Sciatic nerve (tissue), 2 donors: ENCODE measurements at regions of chr15 and their contacts with region 1.

Region 1: DNA sequence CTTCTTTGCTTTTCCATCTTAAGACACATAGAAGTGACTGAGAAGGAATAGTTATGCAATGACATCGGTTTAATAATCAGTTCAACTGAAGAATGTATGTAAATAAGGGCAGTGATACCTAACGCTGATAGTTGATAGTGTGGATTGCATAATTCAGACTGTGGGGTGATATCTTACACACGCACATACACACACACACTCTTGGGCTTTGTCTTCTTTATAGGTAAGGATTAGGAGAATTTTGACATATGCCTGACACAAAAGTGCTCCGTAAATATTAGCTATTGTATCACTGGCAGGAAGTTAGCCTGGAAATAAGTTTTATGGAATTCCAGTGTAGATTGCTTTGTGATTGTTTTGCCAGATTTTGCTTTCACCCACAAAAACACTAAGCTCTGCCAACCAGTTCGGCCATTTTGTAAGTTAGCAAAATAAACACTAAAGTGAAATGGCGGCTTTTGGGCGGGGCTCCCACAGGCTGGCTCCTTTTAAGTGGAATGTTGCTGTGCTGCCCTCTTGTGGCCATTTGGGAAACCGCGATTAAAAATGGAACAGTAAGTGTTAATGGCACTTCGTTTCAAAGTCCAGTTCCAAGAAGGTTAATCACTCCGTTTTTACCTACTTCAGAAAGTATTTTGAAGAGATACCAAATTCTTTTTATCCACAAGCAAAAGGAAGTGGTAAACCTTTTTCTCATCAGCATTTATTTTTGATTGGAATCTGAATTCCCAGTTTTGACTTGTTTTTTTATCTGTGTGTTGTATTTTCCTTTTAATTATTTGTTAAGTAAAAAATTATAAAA is 17.7 kb downstream of the CHD2 start:
- DNase-seq: peak; percentile 97
- ATAC-seq: peak; percentile 86

Region 2: GRCh38 chr15:92808978-92809879 is 108.6 kb before region 1 on chr15:
- intact Hi-C with region 1: loop called (anchors 5 kb)
- DNase-seq: peak; percentile 99
- ATAC-seq: peak; percentile 94

Region 3: DNA sequence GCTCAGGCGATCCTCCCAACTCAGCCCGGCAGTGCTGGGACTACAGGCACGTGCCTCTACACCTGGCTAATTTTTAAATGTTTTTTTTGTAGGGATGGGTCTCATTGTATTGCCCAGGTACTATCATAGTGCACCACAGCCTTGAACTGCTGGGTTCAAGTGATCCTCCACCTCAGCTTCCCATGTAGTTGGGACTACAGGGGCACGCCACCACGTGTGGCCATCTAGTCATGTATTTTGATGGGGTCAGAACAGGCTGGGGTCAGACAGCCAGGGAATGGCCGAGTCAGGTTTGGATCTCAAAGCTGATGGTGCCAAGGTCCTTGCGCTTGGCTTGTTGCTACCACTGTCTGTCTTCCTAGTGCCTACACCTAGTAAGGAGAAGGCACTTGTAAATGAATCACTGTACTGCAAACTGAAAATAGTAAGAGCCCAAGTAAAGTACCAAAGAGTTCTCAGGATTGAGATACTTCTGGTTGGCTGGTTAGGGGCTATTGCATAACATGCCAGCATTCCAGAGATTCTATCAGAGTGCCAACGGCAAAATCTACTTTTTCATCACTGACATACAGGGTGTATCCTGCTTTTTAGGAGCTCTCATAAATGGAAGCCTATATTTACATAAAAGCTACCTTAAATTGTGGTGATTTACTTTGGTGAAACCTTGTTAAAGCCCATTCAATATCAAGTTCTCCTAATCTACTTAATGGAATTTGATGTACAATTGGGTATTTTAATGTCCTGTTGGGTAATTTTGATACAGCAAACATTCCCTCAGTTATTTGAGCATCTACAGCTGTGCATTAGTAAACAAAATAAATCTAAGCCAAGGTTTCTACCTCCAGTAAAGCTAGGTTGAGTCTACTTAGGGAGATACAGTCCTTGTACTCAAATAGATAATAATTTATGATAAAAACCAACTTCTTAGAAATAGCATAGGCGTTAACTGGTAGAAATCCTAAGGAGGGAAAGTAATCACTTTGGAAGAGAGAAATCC is 48.5 kb before region 1 on chr15:
- intact Hi-C with region 1: no loop called
- DNase-seq: no peak
- ATAC-seq: peak; percentile 65

Region 4: GRCh38 chr15:92989470-92989869 is 71.7 kb after region 1 on chr15:
- intact Hi-C with region 1: no loop called
- DNase-seq: no peak
- ATAC-seq: no peak